ENCODE measurements at regions of chr7 and their contacts with region 1.

Region 1: DNA sequence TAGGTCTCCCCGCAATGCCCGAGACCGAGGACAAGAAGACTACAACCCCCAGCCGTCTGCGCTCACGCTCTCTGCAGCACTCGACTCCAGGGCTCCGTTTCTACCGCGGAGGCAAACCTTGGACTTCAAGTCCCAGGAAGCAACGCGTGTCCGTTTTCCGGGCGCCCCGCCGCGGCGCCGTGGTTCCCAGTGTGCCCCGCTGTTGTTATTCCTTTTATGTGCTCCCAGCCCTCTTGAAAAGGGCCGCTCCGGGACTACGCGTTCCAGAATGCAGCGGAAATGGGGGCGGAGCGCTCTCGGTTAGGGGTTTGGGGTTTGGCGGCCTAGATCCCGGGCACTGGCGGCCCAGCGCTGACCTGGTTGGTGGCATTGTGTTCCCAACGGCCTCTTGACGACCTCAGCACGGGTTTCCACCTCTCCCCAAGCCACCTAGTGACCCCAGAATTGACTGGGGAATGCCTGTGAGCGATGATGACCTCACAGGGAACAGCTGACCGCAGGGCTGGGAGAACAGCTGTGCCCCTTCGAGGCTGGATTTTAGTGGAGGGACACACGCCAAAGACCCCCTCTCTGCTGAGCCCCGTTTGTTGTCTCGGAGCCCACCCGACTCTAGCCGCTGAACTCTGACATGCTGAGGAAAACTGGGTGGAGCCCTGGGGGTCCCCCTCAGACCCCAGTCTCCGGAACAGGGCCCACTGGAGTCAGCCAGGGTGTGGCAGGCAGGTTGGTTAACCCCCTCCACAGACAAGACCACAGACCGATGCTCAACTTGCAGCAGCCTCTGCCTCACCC is 488 bp upstream of the CDK5 start:
- DNase-seq: peak; percentile 98
- H3K4me3 Mint-ChIP-seq: peak overlapping the region; percentile 85
- H3K27ac Mint-ChIP-seq: peak overlapping the region; percentile 89
- H3K4me1 Mint-ChIP-seq: peaks cover 35% of the 10 kb centered on the region
- H3K27me3 Mint-ChIP-seq: no peaks in the 10 kb centered on the region

Region 2: GRCh38 chr7:150903606-150904005 is 154.6 kb before region 1 on chr7:
- CTCF ChIA-PET with region 1: no interaction called
- intact Hi-C with region 1: no loop called
- DNase-seq: peak; percentile 33
- H3K4me3 Mint-ChIP-seq: no peak overlapping the region
- H3K27ac Mint-ChIP-seq: no peak overlapping the region
- H3K4me1 Mint-ChIP-seq: peaks cover 3% of the 10 kb centered on the region
- H3K27me3 Mint-ChIP-seq: peaks cover 17% of the 10 kb centered on the region

Region 3: GRCh38 chr7:151028131-151028947 is 29.8 kb before region 1 on chr7 and contains the start of gene ABCB8:
- CTCF ChIA-PET with region 1: interaction called, 4 read pairs
- intact Hi-C with region 1: loop called (anchors 1 kb)
- DNase-seq: peak; percentile 100
- H3K4me3 Mint-ChIP-seq: peak within 1 kb of the TSS; percentile 91
- H3K27ac Mint-ChIP-seq: peak within 1 kb of the TSS; percentile 90
- H3K4me1 Mint-ChIP-seq: peaks cover 20% of the 10 kb centered on the region
- H3K27me3 Mint-ChIP-seq: no peaks in the 10 kb centered on the region
- total RNA-seq, gene ABCB8: 41.3 to 47.8 TPM

Region 4: DNA sequence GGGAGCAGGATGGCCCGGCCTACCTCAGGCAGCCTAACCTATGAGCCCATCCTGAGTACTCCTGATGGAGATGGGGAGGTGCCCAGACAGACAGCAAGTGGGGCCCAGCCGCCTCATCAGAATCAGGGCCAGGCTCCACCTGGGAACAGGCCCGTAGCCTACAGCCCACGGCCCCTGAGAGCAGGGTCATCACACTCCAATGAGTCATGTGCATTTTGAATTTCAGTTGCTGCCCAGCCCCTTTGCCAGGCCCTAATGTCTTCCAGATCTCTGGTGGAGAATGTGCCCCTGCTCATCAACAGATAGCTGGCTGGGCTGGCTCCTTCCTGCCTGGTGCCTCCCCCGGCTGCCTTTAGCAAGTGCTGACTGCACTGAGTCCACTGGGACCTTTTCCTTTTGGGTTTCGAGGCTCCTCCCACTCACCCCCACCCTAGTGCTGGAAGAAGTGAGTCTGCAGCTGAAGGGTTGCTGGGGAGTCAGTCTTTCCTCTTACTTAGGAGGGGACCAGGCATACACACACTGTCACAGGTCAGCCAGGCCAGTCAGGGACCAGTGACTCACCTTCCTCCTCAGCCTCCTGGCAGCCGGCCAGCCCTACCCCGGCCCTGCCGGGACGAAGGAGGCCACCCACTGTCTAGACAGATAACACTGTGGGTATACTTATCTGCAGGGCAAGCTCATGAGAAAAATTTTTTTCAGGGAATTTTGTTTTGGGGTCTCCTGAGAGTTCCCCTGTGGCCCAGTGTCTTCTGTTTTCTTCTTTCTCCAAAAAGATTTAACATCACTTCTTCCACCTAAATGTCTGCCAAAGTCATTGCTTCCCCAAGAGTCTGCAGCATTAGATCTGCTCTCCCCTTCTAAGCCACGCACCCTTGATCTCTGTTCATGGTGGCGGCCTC is 19.0 kb before region 1 on chr7:
- CTCF ChIA-PET with region 1: no interaction called
- intact Hi-C with region 1: loop called (anchors 1 kb)
- DNase-seq: peak; percentile 80
- H3K4me3 Mint-ChIP-seq: no peak overlapping the region
- H3K27ac Mint-ChIP-seq: peak overlapping the region; percentile 35
- H3K4me1 Mint-ChIP-seq: peaks cover 16% of the 10 kb centered on the region
- H3K27me3 Mint-ChIP-seq: no peaks in the 10 kb centered on the region

Region 5: GRCh38 chr7:151080522-151081169 is 22.5 kb after region 1 on chr7 and contains the start of gene FASTK:
- CTCF ChIA-PET with region 1: no interaction called
- intact Hi-C with region 1: loop called (anchors 1 kb)
- DNase-seq: peak; percentile 93
- H3K4me3 Mint-ChIP-seq: peak within 1 kb of the TSS; percentile 86
- H3K27ac Mint-ChIP-seq: peak within 1 kb of the TSS; percentile 73
- H3K4me1 Mint-ChIP-seq: peaks cover 36% of the 10 kb centered on the region
- H3K27me3 Mint-ChIP-seq: peaks cover 7% of the 10 kb centered on the region
- total RNA-seq, gene FASTK: 43.6 to 45.7 TPM

Region 6: DNA sequence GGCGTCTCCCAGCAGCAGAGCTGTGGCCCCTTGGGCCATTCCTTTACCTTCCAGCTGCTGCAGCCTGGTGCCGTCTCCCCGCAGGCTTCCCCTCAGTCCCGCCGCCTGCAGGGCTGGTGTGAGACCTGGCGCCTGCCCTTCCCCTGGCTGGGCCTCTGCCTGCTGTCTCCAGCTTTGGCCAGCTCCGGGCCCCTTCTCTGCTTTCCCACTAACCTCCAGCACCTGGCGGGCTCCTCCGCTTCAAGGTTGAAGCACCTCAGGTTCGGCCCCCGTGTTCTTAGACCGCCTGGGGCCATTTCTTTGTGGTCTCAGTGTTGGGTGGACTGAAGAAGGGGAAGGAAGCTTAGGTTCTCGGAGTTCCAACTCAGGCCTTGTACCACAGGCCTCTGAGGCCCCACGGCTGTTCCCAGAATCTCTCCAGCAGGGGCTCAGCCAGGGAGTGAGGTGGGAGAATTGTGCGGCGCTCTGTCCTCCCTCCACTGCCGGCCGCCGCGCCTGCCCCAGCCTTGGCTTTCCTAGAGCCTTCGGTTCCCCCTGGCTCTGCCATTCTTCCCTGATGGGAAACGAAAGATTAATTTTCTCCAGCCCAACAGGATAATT is 79.0 kb after region 1 on chr7:
- CTCF ChIA-PET with region 1: no interaction called
- intact Hi-C with region 1: no loop called
- DNase-seq: no peak
- H3K4me3 Mint-ChIP-seq: no peak overlapping the region
- H3K27ac Mint-ChIP-seq: no peak overlapping the region
- H3K4me1 Mint-ChIP-seq: no peaks in the 10 kb centered on the region
- H3K27me3 Mint-ChIP-seq: no peaks in the 10 kb centered on the region

Region 7: DNA sequence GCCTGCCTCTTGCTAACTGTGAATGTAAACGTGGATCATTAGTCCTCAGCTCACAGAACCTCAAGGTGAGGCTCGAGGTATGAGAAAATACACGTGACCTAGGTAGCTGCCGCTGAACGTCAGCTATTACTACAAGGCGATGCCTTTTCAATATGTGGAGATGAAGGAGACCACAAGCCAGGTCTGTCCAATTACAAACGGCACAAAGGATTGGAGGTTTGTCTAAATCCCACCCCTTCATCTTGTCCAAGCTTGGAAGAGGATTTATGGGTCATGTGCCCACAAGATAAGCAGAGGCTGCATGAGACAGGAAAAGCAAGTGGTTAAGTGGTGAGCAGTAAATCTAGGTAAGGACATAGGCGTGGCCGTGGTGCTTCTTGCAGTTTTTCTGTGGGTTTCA is 148.7 kb after region 1 on chr7:
- CTCF ChIA-PET with region 1: no interaction called
- intact Hi-C with region 1: no loop called
- DNase-seq: no peak
- H3K4me3 Mint-ChIP-seq: no peak overlapping the region
- H3K27ac Mint-ChIP-seq: no peak overlapping the region
- H3K4me1 Mint-ChIP-seq: peaks cover 17% of the 10 kb centered on the region
- H3K27me3 Mint-ChIP-seq: peaks cover 2% of the 10 kb centered on the region

Region 8: DNA sequence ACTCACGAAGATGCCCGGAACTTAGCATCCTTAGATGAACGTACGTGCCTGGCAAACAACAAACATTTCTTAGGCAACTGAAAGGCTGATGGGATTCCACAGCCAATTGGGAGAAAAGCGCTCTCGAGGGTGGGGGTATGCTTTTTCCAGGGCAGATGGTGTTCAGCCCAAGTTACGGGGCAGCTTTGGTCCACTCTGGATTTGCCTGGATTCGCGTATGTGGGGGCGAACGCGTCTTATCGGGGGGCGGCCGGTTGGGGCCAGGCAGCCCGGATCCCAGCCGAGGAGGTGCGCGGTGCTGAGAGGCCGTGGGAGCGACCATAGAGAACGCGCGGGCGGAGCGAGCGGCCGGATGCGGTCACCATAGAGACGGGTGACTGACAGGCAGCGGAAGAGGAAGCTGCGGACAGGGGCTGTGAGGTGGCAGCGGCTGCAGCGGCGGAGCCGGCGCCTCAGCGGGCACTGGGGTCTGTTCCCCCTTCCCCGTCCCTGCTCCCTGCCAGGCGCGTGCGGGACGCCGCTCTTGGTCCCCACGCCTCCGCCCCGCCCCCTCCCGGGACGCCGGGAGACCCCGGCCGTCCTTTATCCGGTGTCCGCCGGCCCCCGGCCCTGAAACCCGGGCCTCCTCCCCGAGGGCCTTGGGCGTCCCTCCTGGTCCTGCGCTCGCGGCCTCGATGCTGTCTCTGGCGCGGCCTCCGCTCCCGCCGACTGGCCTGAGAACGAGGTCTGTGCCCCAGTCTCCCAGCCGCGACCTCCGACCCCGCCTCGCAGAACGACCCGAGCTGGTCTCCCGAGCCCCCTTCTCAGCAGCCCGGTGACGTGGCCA is 174.1 kb after region 1 on chr7 and contains the start of gene CHPF2:
- CTCF ChIA-PET with region 1: no interaction called
- intact Hi-C with region 1: loop called (anchors 1 kb)
- DNase-seq: peak; percentile 94
- H3K4me3 Mint-ChIP-seq: peak within 1 kb of the TSS; percentile 100
- H3K27ac Mint-ChIP-seq: peak within 1 kb of the TSS; percentile 99
- H3K4me1 Mint-ChIP-seq: peaks cover 35% of the 10 kb centered on the region
- H3K27me3 Mint-ChIP-seq: no peaks in the 10 kb centered on the region
- total RNA-seq, gene CHPF2: 21.0 TPM

Measured in activated naive CD4-positive, alpha-beta T cell treated with anti-CD3 and anti-CD28 coated beads for 36 hours (primary cell).